GM13977 (cell line): ENCODE measurements at regions of chr12 and their contacts with region 1.

Region 1: GRCh38 chr12:101759396-101760047 is 20.3 kb upstream of the SYCP3 start:
- DNase-seq: peak; percentile 37
- CTCF ChIP-seq: peak; percentile 75

Region 2: DNA sequence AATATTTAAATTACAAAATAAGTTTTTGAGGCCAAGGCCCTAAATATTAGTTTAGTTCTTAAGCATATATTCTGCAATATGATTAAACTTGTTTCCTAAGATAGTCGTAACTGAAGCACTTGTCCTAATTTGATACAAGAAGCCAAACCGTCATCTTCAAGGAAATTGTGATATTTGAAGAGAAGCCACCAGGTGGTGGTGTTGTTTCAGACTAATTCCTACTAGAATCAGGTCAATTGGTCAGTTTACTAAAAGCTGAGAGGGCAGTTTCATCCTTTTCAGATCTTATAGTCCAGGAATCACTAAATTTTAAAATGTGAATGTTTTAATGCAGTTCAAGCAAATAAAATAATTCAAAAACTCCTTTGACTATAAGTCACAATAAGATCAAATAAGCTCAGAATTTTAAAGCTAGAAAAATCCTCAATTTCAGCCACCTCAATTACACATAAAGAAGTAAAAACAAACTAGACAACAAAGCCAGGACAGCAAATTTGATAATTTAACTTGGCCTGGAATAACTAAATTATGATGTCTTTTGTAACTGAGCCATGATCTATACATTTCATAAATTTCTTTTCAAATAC is 344.9 kb before region 1 on chr12:
- in situ Hi-C with region 1: loop called (anchors 10 kb)
- DNase-seq: peak; percentile 53
- CTCF ChIP-seq: peak; percentile 60